Activated CD4-positive, alpha-beta T cell treated with anti-CD3 and anti-CD28 coated beads for 36 hours (primary cell): ENCODE measurements at regions of chr6 and their contacts with region 1.

Region 1: GRCh38 chr6:19052219-19052618 is 665.1 kb downstream of the RNF144B start:
- DNase-seq: no peak
- ATAC-seq: no peak
- H3K4me3 Mint-ChIP-seq: no peak overlapping the region
- H3K27ac Mint-ChIP-seq: no peak overlapping the region
- H3K4me1 Mint-ChIP-seq: no peaks in the 10 kb centered on the region
- H3K27me3 Mint-ChIP-seq: no peaks in the 10 kb centered on the region

Region 2: GRCh38 chr6:19013026-19013705 is 39.1 kb before region 1 on chr6:
- CTCF ChIA-PET with region 1: no interaction called
- POLR2A ChIA-PET with region 1: no interaction called
- intact Hi-C with region 1: no loop called
- DNase-seq: no peak
- ATAC-seq: no peak
- H3K4me3 Mint-ChIP-seq: no peak overlapping the region
- H3K27ac Mint-ChIP-seq: no peak overlapping the region
- H3K4me1 Mint-ChIP-seq: no peaks in the 10 kb centered on the region
- H3K27me3 Mint-ChIP-seq: no peaks in the 10 kb centered on the region

Region 3: GRCh38 chr6:19035461-19036195 is 16.6 kb before region 1 on chr6:
- CTCF ChIA-PET with region 1: no interaction called
- POLR2A ChIA-PET with region 1: no interaction called
- intact Hi-C with region 1: loop called (anchors 1 kb)
- DNase-seq: no peak
- ATAC-seq: no peak
- H3K4me3 Mint-ChIP-seq: no peak overlapping the region
- H3K27ac Mint-ChIP-seq: no peak overlapping the region
- H3K4me1 Mint-ChIP-seq: no peaks in the 10 kb centered on the region
- H3K27me3 Mint-ChIP-seq: no peaks in the 10 kb centered on the region

Region 4: DNA sequence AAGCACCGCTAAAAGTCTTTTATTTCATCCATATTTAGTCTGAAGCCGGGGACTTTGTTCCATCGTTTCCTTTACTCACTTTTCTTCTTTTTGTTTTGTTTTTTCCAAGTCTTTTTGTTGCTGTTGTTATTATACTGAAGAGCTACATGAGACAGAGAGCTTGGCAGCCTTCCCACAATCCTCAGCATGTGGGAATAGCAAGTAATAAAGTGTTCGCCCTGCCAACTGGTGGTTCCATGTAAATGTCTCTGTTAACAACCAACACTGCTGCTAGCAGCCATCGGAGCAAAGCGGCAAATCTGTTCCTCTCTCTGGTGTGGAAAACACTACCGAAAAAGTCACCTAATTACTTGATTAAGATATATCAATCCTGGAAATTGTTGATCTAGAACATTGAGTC is 347.2 kb after region 1 on chr6:
- CTCF ChIA-PET with region 1: no interaction called
- POLR2A ChIA-PET with region 1: no interaction called
- intact Hi-C with region 1: no loop called
- DNase-seq: no peak
- ATAC-seq: no peak
- H3K4me3 Mint-ChIP-seq: no peak overlapping the region
- H3K27ac Mint-ChIP-seq: no peak overlapping the region
- H3K4me1 Mint-ChIP-seq: no peaks in the 10 kb centered on the region
- H3K27me3 Mint-ChIP-seq: no peaks in the 10 kb centered on the region

Region 5: GRCh38 chr6:20183030-20183437 is 1130.8 kb after region 1 on chr6:
- CTCF ChIA-PET with region 1: no interaction called
- POLR2A ChIA-PET with region 1: no interaction called
- intact Hi-C with region 1: no loop called
- DNase-seq: no peak
- ATAC-seq: no peak
- H3K4me3 Mint-ChIP-seq: no peak overlapping the region
- H3K27ac Mint-ChIP-seq: no peak overlapping the region
- H3K4me1 Mint-ChIP-seq: peaks cover 6% of the 10 kb centered on the region
- H3K27me3 Mint-ChIP-seq: no peaks in the 10 kb centered on the region